Calu3 (cell line): ENCODE measurements at regions of chr2 and their contacts with region 1.

Region 1: GRCh38 chr2:72745679-72746368 is 80.0 kb downstream of the EXOC6B start:
- DNase-seq: peak; percentile 43
- H3K4me3 Mint-ChIP-seq: no peak overlapping the region
- H3K27ac Mint-ChIP-seq: no peak overlapping the region
- H3K4me1 Mint-ChIP-seq: no peaks in the 10 kb centered on the region
- H3K27me3 Mint-ChIP-seq: no peaks in the 10 kb centered on the region
- CTCF ChIP-seq: peak; percentile 47

Region 2: GRCh38 chr2:71923887-71924533 is 821.8 kb before region 1 on chr2:
- CTCF ChIA-PET with region 1: interaction called, 3 read pairs
- intact Hi-C with region 1: loop called (anchors 5 kb)
- DNase-seq: peak; percentile 77
- H3K4me3 Mint-ChIP-seq: no peak overlapping the region
- H3K27ac Mint-ChIP-seq: no peak overlapping the region
- H3K4me1 Mint-ChIP-seq: no peaks in the 10 kb centered on the region
- H3K27me3 Mint-ChIP-seq: peaks cover 18% of the 10 kb centered on the region
- CTCF ChIP-seq: peak; percentile 79

Region 3: DNA sequence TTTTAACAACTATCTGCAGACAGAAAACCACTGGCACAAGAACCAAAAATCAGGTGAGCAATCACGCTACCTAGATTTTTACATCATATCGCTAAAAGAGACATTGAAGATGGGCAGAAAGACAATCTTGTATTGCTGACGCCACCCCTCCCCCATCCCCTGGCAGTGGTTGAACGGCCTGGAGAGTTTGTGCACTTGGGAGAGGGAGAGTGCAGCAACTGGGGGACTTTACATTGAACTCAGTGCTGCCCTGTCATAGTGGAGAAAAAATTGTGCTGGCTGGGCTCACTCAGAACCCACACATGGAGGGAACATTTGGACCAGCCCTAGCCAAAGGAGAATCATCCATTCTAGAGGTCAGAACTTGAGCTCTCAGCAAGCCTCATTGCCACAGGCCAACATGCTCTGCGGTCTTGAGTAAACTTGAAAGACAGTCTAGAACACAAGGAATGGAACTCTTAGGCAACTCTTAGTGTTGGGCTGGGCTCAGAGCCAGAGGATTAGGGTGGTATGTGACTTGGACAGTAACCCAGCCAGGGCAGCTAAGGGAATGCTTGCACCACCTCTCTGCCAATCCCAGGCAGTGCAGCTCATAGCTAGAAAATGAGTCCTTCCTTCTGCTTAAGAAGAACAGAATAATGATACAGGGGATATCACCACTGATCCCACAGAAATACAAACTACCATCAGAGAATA is 378.1 kb before region 1 on chr2:
- CTCF ChIA-PET with region 1: no interaction called
- intact Hi-C with region 1: loop called (anchors 10 kb)
- DNase-seq: peak; percentile 77
- H3K4me3 Mint-ChIP-seq: no peak overlapping the region
- H3K27ac Mint-ChIP-seq: no peak overlapping the region
- H3K4me1 Mint-ChIP-seq: no peaks in the 10 kb centered on the region
- H3K27me3 Mint-ChIP-seq: no peaks in the 10 kb centered on the region
- CTCF ChIP-seq: peak; percentile 26

Region 4: GRCh38 chr2:72605836-72606442 is 139.9 kb before region 1 on chr2:
- CTCF ChIA-PET with region 1: no interaction called
- intact Hi-C with region 1: loop called (anchors 5 kb)
- DNase-seq: no peak
- H3K4me3 Mint-ChIP-seq: no peak overlapping the region
- H3K27ac Mint-ChIP-seq: no peak overlapping the region
- H3K4me1 Mint-ChIP-seq: no peaks in the 10 kb centered on the region
- H3K27me3 Mint-ChIP-seq: no peaks in the 10 kb centered on the region
- CTCF ChIP-seq: peak; percentile 40

Region 5: GRCh38 chr2:72638600-72639194 is 107.1 kb before region 1 on chr2:
- CTCF ChIA-PET with region 1: no interaction called
- intact Hi-C with region 1: no loop called
- DNase-seq: no peak
- H3K4me3 Mint-ChIP-seq: no peak overlapping the region
- H3K27ac Mint-ChIP-seq: no peak overlapping the region
- H3K4me1 Mint-ChIP-seq: no peaks in the 10 kb centered on the region
- H3K27me3 Mint-ChIP-seq: no peaks in the 10 kb centered on the region
- CTCF ChIP-seq: no peak